Dendritic cell treated with granulocyte-macrophage colony-stimulating factor and Interleukin-4, amounts not matched to agents 40 ng/mL and 50 ng/mL, for 4 days (primary cell): ENCODE measurements at regions of chr3 and their contacts with region 1.

Region 1: GRCh38 chr3:183178629-183179549 is 16.4 kb upstream of the LAMP3 start:
- H3K4me3 Mint-ChIP-seq: peak overlapping the region; percentile 79
- H3K27ac Mint-ChIP-seq: peak overlapping the region; percentile 18
- H3K4me1 Mint-ChIP-seq: peaks cover 20% of the 10 kb centered on the region
- H3K27me3 Mint-ChIP-seq: peaks cover 69% of the 10 kb centered on the region

Region 2: GRCh38 chr3:183377307-183377959 is 198.5 kb after region 1 on chr3:
- intact Hi-C with region 1: loop called (anchors 1 kb)
- H3K4me3 Mint-ChIP-seq: peak overlapping the region; percentile 11
- H3K27ac Mint-ChIP-seq: peak overlapping the region; percentile 43
- H3K4me1 Mint-ChIP-seq: peaks cover 75% of the 10 kb centered on the region
- H3K27me3 Mint-ChIP-seq: peaks cover 17% of the 10 kb centered on the region

Region 3: GRCh38 chr3:183385698-183386613 is 207.1 kb after region 1 on chr3:
- intact Hi-C with region 1: loop called (anchors 1 kb)
- H3K4me3 Mint-ChIP-seq: no peak overlapping the region
- H3K27ac Mint-ChIP-seq: peak overlapping the region; percentile 39
- H3K4me1 Mint-ChIP-seq: peaks cover 17% of the 10 kb centered on the region
- H3K27me3 Mint-ChIP-seq: no peaks in the 10 kb centered on the region